ENCODE measurements at regions of chr4 and their contacts with region 1.

Region 1: DNA sequence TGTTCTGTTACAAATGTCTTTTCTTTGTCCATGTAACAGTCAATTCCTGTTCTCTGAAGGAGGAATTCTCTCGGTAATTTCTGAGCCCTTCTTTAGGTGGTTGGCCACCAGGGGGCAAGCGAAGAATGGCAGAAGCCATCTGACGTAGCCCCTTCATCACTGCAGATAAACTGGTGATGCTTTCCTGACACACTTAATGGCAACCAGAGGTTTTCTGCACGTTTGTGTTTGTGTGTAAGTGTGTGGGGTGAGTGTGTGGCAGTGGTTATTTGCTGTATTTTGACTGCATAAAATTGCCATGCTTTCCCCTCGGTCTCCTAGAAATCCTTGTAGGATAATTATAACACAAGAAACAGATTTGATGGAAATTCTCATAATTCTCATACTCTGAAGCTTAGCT is 64.8 kb upstream of the STOX2 start:
- DNase-seq: peak; percentile 23
- H3K4me3 ChIP-seq: no peak overlapping the region
- CTCF ChIP-seq: peak; percentile 85

Region 2: GRCh38 chr4:184168406-184169019 is 328.2 kb after region 1 on chr4:
- CTCF ChIA-PET with region 1: interaction called, 46 read pairs
- POLR2A ChIA-PET with region 1: no interaction called
- DNase-seq: no peak
- H3K4me3 ChIP-seq: no peak overlapping the region; the same call in 1 of the 2 replicates
- CTCF ChIP-seq: peak; percentile 96